Activated T-helper 2 cell treated with anti-CD3 and anti-CD28 coated beads, Interferon-gamma antibody, Interleukin-2, Interleukin-4, amounts not matched to agents 10 μg/mL and 5 μg/mL and 100 μg/mL, durations not matched to agents 14 hours and 24 hours and 36 hours (primary cell): ENCODE measurements at regions of chr9 and their contacts with region 1.

Region 1: GRCh38 chr9:92764988-92765936 is 629 bp upstream of the BICD2 start:
- DNase-seq: peak; percentile 97
- H3K4me3 Mint-ChIP-seq: peak overlapping the region; percentile 83
- H3K27ac Mint-ChIP-seq: peak overlapping the region; percentile 87
- H3K4me1 Mint-ChIP-seq: peaks cover 28% of the 10 kb centered on the region
- H3K27me3 Mint-ChIP-seq: no peaks in the 10 kb centered on the region

Region 2: DNA sequence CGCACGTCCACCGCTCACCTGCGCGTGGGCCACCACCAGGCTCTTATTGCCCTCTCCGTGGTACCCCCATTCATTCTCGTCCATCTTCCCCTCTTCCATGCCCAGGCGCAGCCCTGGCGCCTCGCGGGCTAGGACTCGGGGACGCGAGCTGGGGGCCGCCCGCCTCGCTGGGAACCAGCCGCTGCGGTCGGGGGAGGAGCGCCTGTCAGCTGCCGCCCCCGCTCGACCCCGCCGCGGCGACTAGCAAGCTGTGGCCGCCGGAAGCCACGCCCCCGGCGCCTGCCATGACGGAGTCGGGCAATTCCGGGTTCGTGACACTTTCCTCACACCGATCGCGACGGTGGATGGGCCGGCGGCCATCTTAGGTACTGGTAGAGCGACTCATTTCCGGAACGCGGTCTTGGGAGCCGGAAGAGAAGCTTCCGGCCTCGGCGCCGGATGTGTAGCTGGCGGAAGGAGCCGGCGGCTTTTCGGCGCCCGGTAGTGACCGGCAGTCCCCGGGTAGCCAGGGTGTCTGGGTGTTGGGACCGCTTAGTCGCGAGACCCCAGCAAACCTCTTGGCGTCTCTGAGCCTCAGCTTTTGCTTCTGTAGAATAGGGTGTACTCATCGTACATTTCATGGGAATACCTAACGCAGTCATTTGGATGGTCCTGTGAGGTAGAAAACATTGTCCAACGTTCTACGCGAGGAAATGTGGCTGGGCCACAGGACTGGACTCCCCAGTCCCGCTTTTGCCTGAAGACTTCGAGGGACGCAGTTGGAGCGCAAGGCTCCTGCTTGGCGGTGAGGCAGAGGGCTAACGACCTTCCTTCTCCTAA is 95.2 kb before region 1 on chr9 and contains the start of gene IPPK:
- intact Hi-C with region 1: loop called (anchors 1 kb)
- DNase-seq: peak; percentile 98
- H3K4me3 Mint-ChIP-seq: peak within 1 kb of the TSS; percentile 93
- H3K27ac Mint-ChIP-seq: peak within 1 kb of the TSS; percentile 81
- H3K4me1 Mint-ChIP-seq: peaks cover 21% of the 10 kb centered on the region
- H3K27me3 Mint-ChIP-seq: no peaks in the 10 kb centered on the region
- total RNA-seq, gene IPPK: 11.5 and 14.8 TPM in 2 replicates

Region 3: DNA sequence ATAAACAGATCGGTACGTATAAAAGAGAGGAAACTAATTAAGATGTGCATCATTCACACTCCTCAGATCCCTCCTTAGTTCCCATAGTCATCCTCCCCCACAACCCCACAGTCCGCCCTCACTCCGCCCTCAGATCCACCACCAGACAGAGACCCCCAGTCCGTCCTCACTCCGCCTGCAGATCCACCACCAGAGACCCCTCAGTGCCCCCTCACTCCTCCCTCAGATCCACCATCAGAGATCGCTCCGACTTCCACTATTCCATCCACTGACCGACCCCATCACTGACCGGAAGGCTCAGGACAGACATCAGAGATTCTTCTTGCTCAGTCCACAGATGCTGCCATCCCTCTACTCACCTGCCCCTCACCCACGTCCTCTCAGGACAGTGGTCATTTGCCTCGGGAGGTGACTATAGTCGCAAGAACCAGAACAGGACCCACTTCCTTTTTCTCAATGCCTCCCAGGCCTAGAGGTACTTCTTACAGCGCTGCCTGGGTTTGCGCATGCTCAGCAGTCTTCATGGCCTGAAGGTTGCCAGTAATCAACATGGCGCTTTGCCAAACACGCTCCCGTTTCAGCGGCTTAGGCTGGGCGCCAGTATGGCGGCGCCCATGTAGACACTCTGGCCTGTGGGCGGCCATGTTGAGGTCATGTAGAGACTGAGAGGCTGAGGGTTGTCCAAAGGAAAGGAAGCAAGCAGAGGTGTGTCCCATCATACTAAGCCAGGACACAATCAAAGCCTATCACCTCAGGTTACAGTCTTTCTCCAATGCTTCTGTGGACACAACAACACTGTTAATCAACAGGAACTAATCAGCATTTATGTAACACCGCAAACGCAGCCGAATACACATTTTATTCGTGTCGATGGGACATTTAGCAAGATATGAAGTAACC is 112.5 kb after region 1 on chr9 and contains the start of gene ZNF484:
- intact Hi-C with region 1: loop called (anchors 1 kb)
- DNase-seq: peak; percentile 93
- H3K4me3 Mint-ChIP-seq: peak within 1 kb of the TSS; percentile 95
- H3K27ac Mint-ChIP-seq: peak within 1 kb of the TSS; percentile 95
- H3K4me1 Mint-ChIP-seq: peaks cover 33% of the 10 kb centered on the region
- H3K27me3 Mint-ChIP-seq: no peaks in the 10 kb centered on the region
- total RNA-seq, gene ZNF484: 7.5 and 8.0 TPM in 2 replicates

Region 4: GRCh38 chr9:93064392-93065134 is 299.3 kb after region 1 on chr9:
- intact Hi-C with region 1: loop called (anchors 5 kb)
- DNase-seq: peak; percentile 90
- H3K4me3 Mint-ChIP-seq: peak overlapping the region; percentile 76
- H3K27ac Mint-ChIP-seq: peak overlapping the region; percentile 94
- H3K4me1 Mint-ChIP-seq: peaks cover 64% of the 10 kb centered on the region
- H3K27me3 Mint-ChIP-seq: no peaks in the 10 kb centered on the region